ENCODE measurements at regions of chr12 and their contacts with region 1.

Region 1: DNA sequence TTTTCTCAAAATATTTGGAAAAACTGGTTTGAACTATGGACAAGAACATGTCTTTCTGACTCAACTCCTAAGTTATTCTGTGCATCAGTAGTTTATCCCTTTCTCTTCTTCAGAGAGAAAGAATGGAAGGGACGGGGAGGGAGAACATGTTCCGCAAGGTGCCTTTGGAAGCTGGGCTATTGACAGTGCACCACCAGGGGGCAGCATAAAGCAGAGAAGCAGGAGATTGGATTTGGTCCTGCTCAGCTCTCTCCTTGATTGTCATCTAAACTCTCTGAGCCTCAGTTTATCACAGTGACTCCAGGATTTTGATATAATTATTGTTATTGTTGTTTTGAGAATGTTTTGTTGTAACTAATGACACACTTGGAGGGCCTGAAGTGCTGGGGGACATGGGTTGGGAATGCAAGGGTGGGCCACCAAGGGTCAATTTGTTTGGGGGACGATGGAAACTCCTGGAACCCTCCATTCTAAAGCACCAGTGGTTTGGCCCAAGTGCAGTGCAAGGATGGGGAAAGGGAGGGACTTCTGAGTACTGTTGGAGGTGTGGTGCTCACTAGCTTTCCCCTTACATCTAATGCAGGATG is 45.3 kb upstream of the ANO6 start:
- DNase-seq: peak; percentile 67 to 92
- H3K4me3 ChIP-seq: no peak overlapping the region
- H3K4me1 ChIP-seq: no peaks in the 10 kb centered on the region
- H3K27me3 ChIP-seq: no peaks in the 10 kb centered on the region

Region 2: DNA sequence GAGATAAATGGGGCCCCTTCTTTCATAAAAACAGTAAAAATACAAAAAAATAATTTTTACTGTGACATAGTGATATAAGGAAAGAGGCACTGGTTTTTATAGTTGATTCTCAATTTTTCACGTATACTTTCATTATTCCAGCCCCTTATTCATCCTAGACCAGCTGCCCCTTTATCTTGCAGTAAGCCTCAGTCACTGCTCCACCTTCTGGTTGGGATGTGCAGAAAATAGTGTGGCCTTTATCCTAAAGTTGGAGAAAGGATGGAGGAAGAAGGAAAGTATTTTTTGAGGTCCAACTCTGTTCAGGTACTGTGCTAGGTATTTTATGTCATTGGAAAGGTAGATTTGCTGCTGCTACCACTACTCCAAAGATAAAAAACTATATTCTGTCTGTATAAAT is 218.0 kb after region 1 on chr12:
- in situ Hi-C with region 1: loop called (anchors 25 kb)
- DNase-seq: peak; percentile 52 to 54
- H3K4me3 ChIP-seq: no peak overlapping the region
- H3K4me1 ChIP-seq: peaks cover 8% of the 10 kb centered on the region
- H3K27me3 ChIP-seq: no peaks in the 10 kb centered on the region

Measured in HAP-1 (cell line).